ENCODE measurements at regions of chr1 and their contacts with region 1.

Region 1: DNA sequence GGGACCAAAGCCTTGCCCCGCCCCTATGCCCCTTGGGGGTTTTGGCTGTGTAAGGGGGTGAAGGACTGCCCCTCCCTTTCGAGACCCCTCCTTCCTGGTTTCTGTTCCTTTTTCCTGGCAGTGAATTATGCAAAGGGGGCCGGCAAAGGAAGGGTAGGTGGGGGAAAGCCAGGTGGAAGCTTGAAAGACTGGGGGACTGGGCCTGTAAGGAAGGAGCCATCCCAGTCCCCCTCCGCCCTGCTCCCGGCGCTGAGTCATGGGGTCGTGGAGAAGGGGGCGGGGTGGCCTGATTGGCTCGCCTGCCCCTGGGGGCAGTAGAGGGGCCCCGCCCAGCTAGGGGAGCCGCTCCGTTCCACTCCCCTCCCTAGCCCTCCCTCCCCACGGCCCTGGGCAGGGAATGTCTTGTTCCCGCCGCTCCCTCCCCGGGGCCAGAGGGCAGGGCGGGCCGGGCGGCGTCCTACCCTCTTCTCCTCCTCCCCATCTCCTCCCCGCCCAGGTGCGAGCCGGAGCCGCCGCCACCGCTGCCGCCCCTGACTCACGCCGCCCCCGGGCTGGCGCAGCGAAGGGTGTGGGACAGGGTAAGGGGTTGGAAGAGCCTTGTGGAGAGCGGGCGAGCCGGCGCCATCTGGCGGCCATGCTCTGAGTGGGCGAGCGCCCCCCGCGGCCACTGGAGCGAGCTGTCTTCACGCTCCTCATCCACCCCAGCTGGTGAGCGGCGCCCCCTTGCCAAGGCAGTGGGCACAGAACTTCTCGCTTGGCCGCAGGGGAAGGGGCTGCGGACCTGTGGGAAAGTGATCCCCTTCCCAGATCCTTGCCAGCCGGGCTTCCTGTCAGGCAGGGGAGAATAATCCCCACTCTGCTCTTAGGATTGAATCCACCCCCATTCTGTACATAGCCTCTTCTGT is 14.7 kb downstream of the ZBTB7B start:
- DNase-seq: peak; percentile 87
- ATAC-seq: peak; percentile 98
- H3K4me3 Mint-ChIP-seq: peak overlapping the region; percentile 22
- H3K27ac Mint-ChIP-seq: peak overlapping the region; percentile 52
- H3K4me1 Mint-ChIP-seq: peaks cover 50% of the 10 kb centered on the region
- H3K27me3 Mint-ChIP-seq: peaks cover 6% of the 10 kb centered on the region

Region 2: DNA sequence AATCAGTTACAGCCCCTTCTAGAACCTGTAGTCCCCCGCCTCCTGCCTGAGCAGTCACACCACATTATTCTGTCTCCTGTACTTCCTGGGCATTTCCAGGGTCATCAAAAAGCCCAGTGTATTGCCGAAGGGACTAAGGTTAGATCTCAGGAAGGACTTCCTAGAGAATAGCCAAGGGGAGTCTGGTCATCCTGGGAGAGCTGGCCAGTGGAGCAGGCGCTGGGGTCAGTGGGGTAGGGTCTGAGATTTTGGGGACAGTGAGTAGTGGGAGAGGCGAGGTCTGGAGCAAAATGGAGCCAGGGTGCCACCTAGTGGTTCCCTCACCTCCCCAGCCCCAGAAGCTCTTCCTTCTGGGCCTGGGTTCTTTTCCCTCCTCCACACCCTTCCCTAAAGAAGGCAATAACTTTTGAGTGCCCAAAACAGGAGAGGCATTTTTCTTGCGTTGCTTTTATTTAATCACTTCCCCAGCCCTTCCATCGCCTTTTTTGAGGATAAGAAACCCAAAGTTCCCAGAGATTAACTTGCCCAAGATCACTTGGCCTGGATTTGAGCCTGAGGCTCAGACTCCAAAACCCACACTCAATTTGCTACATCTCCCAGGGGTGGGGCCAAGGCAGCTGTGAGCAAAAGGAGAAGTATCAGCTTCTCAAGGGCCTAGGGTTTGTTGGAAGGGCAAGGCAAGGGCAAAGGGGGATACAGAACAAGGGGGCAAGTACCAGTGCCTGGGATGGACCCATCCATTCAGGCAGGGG is 73.5 kb before region 1 on chr1:
- CTCF ChIA-PET with region 1: interaction called, 10 read pairs
- POLR2A ChIA-PET with region 1: no interaction called
- DNase-seq: peak; percentile 58
- ATAC-seq: peak; percentile 17
- H3K4me3 Mint-ChIP-seq: peak overlapping the region; percentile 10
- H3K27ac Mint-ChIP-seq: peak overlapping the region; percentile 91
- H3K4me1 Mint-ChIP-seq: peaks cover 55% of the 10 kb centered on the region
- H3K27me3 Mint-ChIP-seq: no peaks in the 10 kb centered on the region

Region 3: DNA sequence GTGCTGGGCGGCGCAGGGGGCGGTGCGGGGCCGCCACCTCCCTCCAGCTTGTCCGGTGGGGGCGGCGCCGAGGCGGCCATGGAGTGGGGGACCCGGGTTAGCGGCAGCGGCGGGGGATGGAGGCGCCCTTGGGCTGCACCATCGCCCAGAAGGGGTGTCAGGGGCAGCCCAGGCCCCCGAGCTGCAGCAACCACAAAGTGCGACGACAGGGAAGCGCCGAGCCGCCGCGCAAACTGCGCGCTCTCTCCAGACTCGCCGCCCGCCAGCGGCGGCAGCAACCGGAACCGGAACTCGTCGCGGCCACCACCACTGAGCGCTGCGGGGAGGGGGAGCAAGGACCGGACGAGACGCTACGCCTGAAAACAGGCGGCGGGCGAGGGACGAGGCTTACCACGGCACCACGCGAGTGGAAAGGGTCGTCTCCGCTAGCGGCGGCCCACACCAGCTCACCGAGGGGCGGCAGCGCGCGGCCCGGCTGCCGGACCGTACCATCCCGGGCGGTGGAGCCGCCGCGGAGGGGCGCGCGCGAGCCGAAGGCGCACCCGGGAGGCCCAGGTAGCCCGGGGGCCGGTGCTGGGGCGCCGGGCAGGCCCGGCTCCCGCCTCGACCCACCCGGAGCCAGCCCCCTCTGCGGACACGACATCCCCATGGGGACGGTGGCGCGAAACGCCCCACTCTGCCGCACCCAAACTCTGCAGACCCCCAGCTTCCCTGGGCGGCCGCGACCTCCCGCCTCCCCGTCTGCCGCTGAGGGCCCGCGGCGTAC is 55.6 kb before region 1 on chr1 and contains the start of gene PYGO2:
- CTCF ChIA-PET with region 1: interaction called, 22 read pairs
- POLR2A ChIA-PET with region 1: no interaction called
- DNase-seq: peak; percentile 85
- ATAC-seq: peak; percentile 83
- H3K4me3 Mint-ChIP-seq: peak within 1 kb of the TSS; percentile 94
- H3K27ac Mint-ChIP-seq: peak within 1 kb of the TSS; percentile 89
- H3K4me1 Mint-ChIP-seq: peaks cover 43% of the 10 kb centered on the region
- H3K27me3 Mint-ChIP-seq: no peaks in the 10 kb centered on the region
- total RNA-seq, gene PYGO2: 40.2 to 43.9 TPM

Region 4: GRCh38 chr1:154982897-154983648 is 34.2 kb before region 1 on chr1 and contains the start of gene FLAD1:
- CTCF ChIA-PET with region 1: interaction called, 33 read pairs
- POLR2A ChIA-PET with region 1: interaction called, 8 read pairs
- DNase-seq: peak; percentile 99
- ATAC-seq: peak; percentile 100
- H3K4me3 Mint-ChIP-seq: no peak within 1 kb of the TSS
- H3K27ac Mint-ChIP-seq: peak within 1 kb of the TSS; percentile 67
- H3K4me1 Mint-ChIP-seq: peaks cover 20% of the 10 kb centered on the region
- H3K27me3 Mint-ChIP-seq: no peaks in the 10 kb centered on the region
- total RNA-seq, gene FLAD1: 39.8 to 45.2 TPM

Region 5: GRCh38 chr1:155001675-155002463 is 15.4 kb before region 1 on chr1:
- CTCF ChIA-PET with region 1: interaction called, 71 read pairs
- POLR2A ChIA-PET with region 1: interaction called, 4 read pairs
- DNase-seq: peak; percentile 100
- ATAC-seq: peak; percentile 76
- H3K4me3 Mint-ChIP-seq: peak overlapping the region; percentile 86
- H3K27ac Mint-ChIP-seq: peak overlapping the region; percentile 97
- H3K4me1 Mint-ChIP-seq: peaks cover 62% of the 10 kb centered on the region
- H3K27me3 Mint-ChIP-seq: no peaks in the 10 kb centered on the region

Region 6: DNA sequence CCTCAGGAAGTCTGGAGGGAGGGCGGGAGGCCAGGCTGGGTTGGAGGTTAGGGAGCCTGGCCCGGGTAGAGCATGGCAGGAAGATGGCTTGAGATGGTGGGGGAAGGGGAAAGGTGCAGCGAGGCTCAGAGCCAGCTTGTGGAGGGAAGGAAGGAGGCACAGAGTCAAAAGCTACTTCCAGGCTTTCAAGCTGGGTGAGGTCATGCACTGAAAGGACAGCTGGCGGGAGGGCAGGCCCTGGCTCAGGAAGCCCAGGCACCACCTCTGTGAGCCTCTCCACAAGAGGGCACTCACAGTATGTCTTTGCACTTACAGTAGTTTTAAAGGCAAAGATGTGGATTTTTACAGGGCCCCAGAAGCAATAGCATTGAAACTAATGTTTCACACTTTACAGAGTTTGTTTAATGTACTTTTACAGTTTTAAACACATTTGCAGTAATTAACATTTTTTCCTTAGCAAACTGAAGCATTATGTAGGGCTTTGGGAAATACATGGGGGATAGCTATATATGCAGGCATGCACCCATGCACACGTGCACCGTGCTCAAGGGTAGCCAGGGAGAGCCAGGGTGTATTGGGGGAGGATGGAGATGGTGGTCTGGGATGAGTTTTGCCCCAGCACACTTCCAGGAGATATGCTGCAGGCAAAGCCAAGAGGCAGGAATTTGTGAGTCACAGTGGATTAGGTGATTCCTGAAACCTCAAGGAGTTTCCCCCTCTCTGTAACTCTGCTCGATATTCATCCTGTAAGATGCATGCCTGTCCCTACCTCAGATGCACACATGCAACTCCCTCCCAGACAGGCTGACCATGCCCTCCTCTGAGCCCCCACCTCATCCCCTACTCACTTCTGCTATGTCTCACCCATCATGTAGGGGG is 27.8 kb after region 1 on chr1:
- CTCF ChIA-PET with region 1: interaction called, 57 read pairs
- POLR2A ChIA-PET with region 1: no interaction called
- DNase-seq: peak; percentile 81
- ATAC-seq: peak; percentile 96
- H3K4me3 Mint-ChIP-seq: no peak overlapping the region
- H3K27ac Mint-ChIP-seq: peak overlapping the region; percentile 47
- H3K4me1 Mint-ChIP-seq: peaks cover 18% of the 10 kb centered on the region
- H3K27me3 Mint-ChIP-seq: peaks cover 6% of the 10 kb centered on the region

Region 7: GRCh38 chr1:155261852-155262673 is 244.8 kb after region 1 on chr1 and contains the start of gene SCAMP3:
- CTCF ChIA-PET with region 1: no interaction called
- POLR2A ChIA-PET with region 1: no interaction called
- DNase-seq: peak; percentile 94
- ATAC-seq: peak; percentile 95
- H3K4me3 Mint-ChIP-seq: peak within 1 kb of the TSS; percentile 98
- H3K27ac Mint-ChIP-seq: peak within 1 kb of the TSS; percentile 93
- H3K4me1 Mint-ChIP-seq: peaks cover 42% of the 10 kb centered on the region
- H3K27me3 Mint-ChIP-seq: no peaks in the 10 kb centered on the region
- total RNA-seq, gene SCAMP3: 77.9 to 84.2 TPM

Measured in activated CD8-positive, alpha-beta T cell treated with anti-CD3 and anti-CD28 coated beads, Interleukin-2, amount 10 ng/mL, durations not matched to agents 7 days and 5 days (primary cell).